IMR-90 (cell line): ENCODE measurements at regions of chr6 and their contacts with region 1.

Region 1: DNA sequence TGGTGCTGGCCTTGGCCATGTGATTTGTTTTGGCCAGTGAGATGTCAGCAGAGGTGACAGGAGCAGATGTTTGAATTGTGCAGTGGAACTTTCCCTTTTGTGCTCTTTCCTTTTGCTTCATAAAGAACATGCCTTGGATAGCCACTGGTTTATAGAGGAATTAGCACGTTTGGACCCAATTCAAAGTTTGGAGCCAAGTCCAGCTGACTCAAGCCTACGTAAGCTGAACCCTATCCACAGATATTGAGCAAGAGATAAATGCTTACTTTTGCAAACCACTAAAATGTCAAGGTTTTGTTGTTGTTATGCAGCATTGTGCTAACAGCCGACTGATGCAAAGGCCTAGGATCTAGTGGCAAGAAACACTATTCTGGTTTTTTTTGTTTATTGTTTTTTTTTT is 230.9 kb upstream of the CITED2 start:
- DNase-seq: peak; percentile 92
- ATAC-seq: peak; percentile 19
- H3K4me3 ChIP-seq: no peak overlapping the region
- H3K27ac ChIP-seq: peak overlapping the region; percentile 68; the same call in 1 of the 2 replicates
- H3K4me1 ChIP-seq: peaks cover 11% of the 10 kb centered on the region
- H3K27me3 ChIP-seq: no peaks in the 10 kb centered on the region
- CTCF ChIP-seq: no peak
- POLR2A ChIP-seq: no peak
- RAD21 ChIP-seq: no peak

Region 2: GRCh38 chr6:139708337-139709199 is 103.2 kb after region 1 on chr6:
- CTCF ChIA-PET with region 1: interaction called, 5 read pairs
- POLR2A ChIA-PET with region 1: no interaction called
- dilution Hi-C with region 1: no loop called
- in situ Hi-C with region 1: no loop called
- intact Hi-C with region 1: loop called (anchors 5 kb)
- DNase-seq: peak; percentile 86
- ATAC-seq: peak; percentile 97
- H3K4me3 ChIP-seq: no peak overlapping the region
- H3K27ac ChIP-seq: peak overlapping the region; percentile 57; the same call in 1 of the 2 replicates
- H3K4me1 ChIP-seq: peaks cover 8% of the 10 kb centered on the region; the same call in 1 of the 2 replicates
- H3K27me3 ChIP-seq: no peaks in the 10 kb centered on the region
- CTCF ChIP-seq: no peak
- POLR2A ChIP-seq: no peak
- RAD21 ChIP-seq: 0 out of 2 replicates have a peak, but pooled peaks have one; percentile 8

Region 3: DNA sequence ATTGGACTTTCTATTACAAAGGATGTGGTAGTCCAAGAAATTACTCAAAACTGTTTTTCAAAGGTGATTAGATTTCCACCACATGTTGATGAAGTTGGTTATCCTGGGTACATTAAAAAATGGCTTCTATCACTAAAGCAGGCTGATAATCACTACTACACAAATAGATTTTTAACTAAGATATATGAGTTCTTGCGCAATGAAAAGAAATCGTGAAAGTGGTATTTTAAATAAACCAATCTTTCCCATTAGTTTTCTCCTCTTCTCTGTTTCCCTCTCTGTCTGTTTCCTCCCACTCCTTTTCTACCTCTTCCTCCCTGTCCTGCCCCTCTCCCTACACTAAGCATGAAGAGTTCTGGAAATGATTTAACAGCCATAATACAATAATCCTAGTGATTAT is 257.0 kb after region 1 on chr6:
- CTCF ChIA-PET with region 1: no interaction called
- POLR2A ChIA-PET with region 1: interaction called, 11 read pairs
- dilution Hi-C with region 1: no loop called
- in situ Hi-C with region 1: no loop called
- intact Hi-C with region 1: no loop called
- DNase-seq: no peak
- ATAC-seq: no peak
- H3K4me3 ChIP-seq: no peak overlapping the region
- H3K27ac ChIP-seq: no peak overlapping the region
- H3K4me1 ChIP-seq: peaks cover 8% of the 10 kb centered on the region
- H3K27me3 ChIP-seq: no peaks in the 10 kb centered on the region
- CTCF ChIP-seq: no peak
- POLR2A ChIP-seq: no peak
- RAD21 ChIP-seq: no peak

Region 4: GRCh38 chr6:140153703-140154102 is 548.4 kb after region 1 on chr6:
- CTCF ChIA-PET with region 1: no interaction called
- POLR2A ChIA-PET with region 1: no interaction called
- dilution Hi-C with region 1: no loop called
- in situ Hi-C with region 1: no loop called
- intact Hi-C with region 1: no loop called
- DNase-seq: peak; percentile 50
- ATAC-seq: no peak
- H3K4me3 ChIP-seq: no peak overlapping the region
- H3K27ac ChIP-seq: no peak overlapping the region
- H3K4me1 ChIP-seq: no peaks in the 10 kb centered on the region
- H3K27me3 ChIP-seq: no peaks in the 10 kb centered on the region
- CTCF ChIP-seq: no peak
- POLR2A ChIP-seq: no peak
- RAD21 ChIP-seq: no peak